ENCODE measurements at regions of chr9 and their contacts with region 1.

Region 1: GRCh38 chr9:124708633-124709291 is 62.3 kb downstream of the NR6A1 start:
- DNase-seq: no peak
- H3K4me3 Mint-ChIP-seq: no peak overlapping the region
- H3K27ac Mint-ChIP-seq: no peak overlapping the region
- H3K4me1 Mint-ChIP-seq: no peaks in the 10 kb centered on the region
- H3K27me3 Mint-ChIP-seq: peaks cover 15% of the 10 kb centered on the region

Region 2: GRCh38 chr9:124415102-124415851 is 293.5 kb before region 1 on chr9 and contains the start of gene PSMB7:
- intact Hi-C with region 1: loop called (anchors 1 kb)
- DNase-seq: peak; percentile 94
- H3K4me3 Mint-ChIP-seq: peak within 1 kb of the TSS; percentile 98
- H3K27ac Mint-ChIP-seq: peak within 1 kb of the TSS; percentile 94
- H3K4me1 Mint-ChIP-seq: peaks cover 37% of the 10 kb centered on the region
- H3K27me3 Mint-ChIP-seq: peaks cover 1% of the 10 kb centered on the region
- total RNA-seq, gene PSMB7: 206 and 220 TPM in 2 replicates

Region 3: GRCh38 chr9:124617471-124618141 is 91.2 kb before region 1 on chr9:
- intact Hi-C with region 1: loop called (anchors 1 kb)
- DNase-seq: peak; percentile 47
- H3K4me3 Mint-ChIP-seq: no peak overlapping the region
- H3K27ac Mint-ChIP-seq: peak overlapping the region; percentile 8
- H3K4me1 Mint-ChIP-seq: no peaks in the 10 kb centered on the region
- H3K27me3 Mint-ChIP-seq: peaks cover 2% of the 10 kb centered on the region

Region 4: GRCh38 chr9:124754289-124754688 is 45.5 kb after region 1 on chr9:
- intact Hi-C with region 1: loop called (anchors 1 kb)
- DNase-seq: no peak
- H3K4me3 Mint-ChIP-seq: no peak overlapping the region
- H3K27ac Mint-ChIP-seq: no peak overlapping the region
- H3K4me1 Mint-ChIP-seq: no peaks in the 10 kb centered on the region
- H3K27me3 Mint-ChIP-seq: peaks cover 42% of the 10 kb centered on the region

Region 5: DNA sequence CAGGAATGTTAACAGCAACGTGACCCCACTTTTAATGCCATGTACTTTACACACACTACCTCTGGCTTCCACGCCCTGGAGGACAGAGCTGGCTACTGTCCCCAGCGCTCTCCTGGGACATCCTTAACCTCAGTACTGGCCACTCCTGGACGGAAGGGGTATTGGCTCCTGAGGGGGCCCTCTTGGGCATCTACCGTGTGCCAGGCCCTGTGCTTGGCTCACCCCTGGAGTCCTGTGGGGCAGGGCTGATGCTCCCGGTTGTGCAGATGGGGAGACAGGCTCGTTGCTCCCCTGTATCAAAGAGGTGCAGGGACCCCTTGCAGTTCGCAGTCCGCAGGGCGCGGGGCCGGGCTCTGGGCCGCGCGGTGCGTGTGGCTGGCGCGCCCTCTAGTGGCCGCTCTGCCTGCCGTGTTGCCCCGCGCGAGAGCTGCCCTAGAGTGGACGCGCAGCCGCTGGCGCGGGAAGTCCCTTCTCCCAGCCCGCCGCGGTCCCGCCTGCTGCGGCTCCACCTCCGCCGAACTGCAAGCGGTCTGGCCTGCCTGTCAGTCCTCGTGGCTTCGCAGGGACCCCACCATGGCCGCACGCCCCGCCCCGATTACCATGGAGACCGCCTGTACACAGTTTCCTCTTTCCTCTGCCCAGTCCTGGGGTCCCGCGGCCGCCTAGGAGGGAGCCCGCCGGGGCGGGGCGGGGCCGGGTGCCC is 144.2 kb after region 1 on chr9 and contains the start of gene WDR38:
- intact Hi-C with region 1: loop called (anchors 1 kb)
- DNase-seq: peak; percentile 79
- H3K4me3 Mint-ChIP-seq: peak within 1 kb of the TSS; percentile 68
- H3K27ac Mint-ChIP-seq: no peak within 1 kb of the TSS
- H3K4me1 Mint-ChIP-seq: peaks cover 16% of the 10 kb centered on the region
- H3K27me3 Mint-ChIP-seq: peaks cover 9% of the 10 kb centered on the region
- total RNA-seq, gene WDR38: not detected in 2 replicates